K562 (cell line): ENCODE measurements at regions of chr5 and their contacts with region 1.

Region 1: DNA sequence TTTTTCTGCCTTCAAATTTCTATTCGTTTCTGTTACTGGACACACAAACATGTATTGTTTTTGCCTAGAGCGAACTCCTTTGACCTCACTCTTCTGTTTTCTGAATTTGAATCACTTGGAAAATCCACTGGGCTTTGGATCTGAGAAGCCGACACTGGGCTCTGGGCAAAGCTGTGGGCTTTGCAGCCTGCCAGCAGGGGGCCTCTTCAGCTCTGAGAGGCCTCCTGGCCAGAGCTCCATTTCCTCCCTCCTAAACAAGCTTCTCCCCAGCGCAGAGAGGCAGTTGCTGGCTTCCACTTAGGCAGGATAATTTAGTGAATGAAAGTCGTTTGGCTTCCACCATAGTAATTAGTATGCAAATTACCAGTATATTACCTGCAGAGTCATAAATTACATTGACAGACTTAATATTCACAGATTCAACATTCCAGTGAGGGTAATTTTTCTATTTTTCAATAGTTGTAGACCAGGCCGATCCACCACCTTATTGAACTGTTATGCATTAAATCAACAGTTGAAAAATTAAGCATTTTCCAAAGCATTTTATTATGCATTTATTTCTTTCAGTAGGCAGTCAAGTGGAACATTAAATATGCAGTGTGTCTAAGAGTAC is 104.0 kb upstream of the ZNF366 start:
- DNase-seq: peak; percentile 58 to 83 (median 67)
- ATAC-seq: peak; percentile 100
- H3K4me3 ChIP-seq: no peak overlapping the region
- H3K27ac ChIP-seq: no peak overlapping the region
- H3K4me1 ChIP-seq: no peaks in the 10 kb centered on the region
- H3K27me3 ChIP-seq: no peaks in the 10 kb centered on the region
- CTCF ChIP-seq: peak; percentile 81 to 94 (median 89)
- EP300 ChIP-seq: no peak
- POLR2A ChIP-seq: no peak
- RAD21 ChIP-seq: peak; percentile 76 to 89

Region 2: DNA sequence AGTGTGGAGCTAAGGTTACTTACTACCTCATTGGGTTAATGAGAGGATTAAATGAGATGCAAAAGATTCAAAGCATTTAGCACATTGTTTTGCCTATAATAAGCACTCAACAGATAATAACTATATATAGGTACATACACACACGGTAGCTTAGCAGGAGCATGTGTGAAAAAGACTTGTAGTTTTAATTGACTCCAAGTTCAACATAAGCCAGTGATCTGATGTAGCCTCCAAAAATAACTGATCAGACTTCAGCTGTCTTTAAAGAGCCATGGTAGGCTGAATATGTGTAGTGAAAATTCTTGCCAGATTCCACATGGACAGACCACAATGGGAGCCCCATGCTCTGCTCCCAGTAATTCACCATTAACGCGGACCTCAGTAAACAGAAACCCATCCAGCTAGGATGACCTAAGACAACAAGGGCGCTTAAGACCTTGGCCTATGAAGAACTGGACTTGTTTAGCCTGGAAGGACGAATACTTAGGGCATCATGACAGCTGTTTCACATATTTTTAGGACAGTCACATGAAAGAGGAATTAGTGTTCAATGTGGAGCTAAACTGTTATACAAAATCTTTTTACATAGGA is 11.0 kb after region 1 on chr5:
- CTCF ChIA-PET with region 1: no interaction called
- POLR2A ChIA-PET with region 1: interaction called, 11 read pairs
- in situ Hi-C with region 1: no loop called
- intact Hi-C with region 1: no loop called
- DNase-seq: no peak
- ATAC-seq: no peak
- H3K4me3 ChIP-seq: no peak overlapping the region
- H3K27ac ChIP-seq: no peak overlapping the region
- H3K4me1 ChIP-seq: no peaks in the 10 kb centered on the region; a peak in 1 of 5 replicates
- H3K27me3 ChIP-seq: no peaks in the 10 kb centered on the region
- CTCF ChIP-seq: no peak
- EP300 ChIP-seq: no peak
- POLR2A ChIP-seq: no peak
- RAD21 ChIP-seq: no peak

Region 3: DNA sequence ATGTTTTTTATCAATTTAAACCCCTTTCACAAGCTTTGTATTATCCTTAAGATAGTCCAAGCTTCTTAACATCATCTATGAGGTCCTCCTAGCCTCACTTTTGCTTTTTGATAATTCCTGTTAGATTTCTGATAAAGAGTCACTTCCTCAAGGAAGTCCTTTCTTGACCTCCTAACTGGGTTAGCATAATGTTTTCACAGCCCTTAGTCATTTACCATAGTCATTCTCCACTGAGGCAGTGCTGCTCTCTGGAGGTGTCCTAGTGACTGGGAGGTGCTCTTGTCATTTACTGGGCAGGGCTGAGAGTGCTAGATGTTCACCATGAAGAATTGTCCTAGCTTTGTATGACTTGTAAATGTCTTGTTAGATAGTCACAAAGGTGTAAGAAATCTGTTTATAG is 231.6 kb after region 1 on chr5:
- CTCF ChIA-PET with region 1: no interaction called
- POLR2A ChIA-PET with region 1: no interaction called
- in situ Hi-C with region 1: no loop called
- intact Hi-C with region 1: loop called (anchors 2 kb)
- DNase-seq: peak in 2 of 4 experiments; percentile 69 to 77
- ATAC-seq: peak; percentile 98
- H3K4me3 ChIP-seq: no peak overlapping the region
- H3K27ac ChIP-seq: peak overlapping the region; percentile 16; the same call in 1 of the 3 replicates
- H3K4me1 ChIP-seq: peaks cover 0 to 12% of the 10 kb centered on the region in 2 experiments; a peak in 2 of 5 replicates
- H3K27me3 ChIP-seq: no peaks in the 10 kb centered on the region
- CTCF ChIP-seq: peak; percentile 58 to 73 (median 59)
- EP300 ChIP-seq: peak; percentile 37; the same call in 1 of the 2 replicates
- POLR2A ChIP-seq: no peak
- RAD21 ChIP-seq: peak; percentile 80 to 86

Region 4: DNA sequence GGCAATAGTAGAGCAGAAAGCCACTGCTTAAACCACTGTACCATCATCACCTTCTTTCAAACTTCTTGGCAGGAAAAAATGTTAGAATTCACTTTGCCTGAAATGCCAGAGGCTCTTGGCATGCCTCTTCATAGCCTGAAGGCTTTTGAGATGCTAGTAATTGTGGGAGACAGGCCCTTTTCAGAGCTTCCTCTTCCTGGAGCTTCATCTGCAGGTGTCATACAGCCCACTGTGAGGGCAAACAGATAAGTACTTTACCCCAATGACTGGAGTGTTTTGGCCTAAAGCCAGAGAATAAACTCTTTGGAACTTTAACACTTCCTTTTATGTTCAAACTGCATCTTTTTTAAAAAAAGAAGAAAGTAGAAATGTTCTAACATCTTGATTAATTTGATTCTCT is 427.9 kb after region 1 on chr5:
- CTCF ChIA-PET with region 1: no interaction called
- POLR2A ChIA-PET with region 1: no interaction called
- in situ Hi-C with region 1: no loop called
- intact Hi-C with region 1: no loop called
- DNase-seq: peak in 2 of 4 experiments; percentile 15 to 28
- ATAC-seq: peak; percentile 57; the same call in 1 of the 3 replicates
- H3K4me3 ChIP-seq: no peak overlapping the region
- H3K27ac ChIP-seq: no peak overlapping the region
- H3K4me1 ChIP-seq: peaks cover 0 to 3% of the 10 kb centered on the region in 2 experiments; a peak in 2 of 5 replicates
- H3K27me3 ChIP-seq: no peaks in the 10 kb centered on the region
- CTCF ChIP-seq: no peak
- EP300 ChIP-seq: no peak
- POLR2A ChIP-seq: no peak
- RAD21 ChIP-seq: no peak